ENCODE measurements at regions of chr17 and their contacts with region 1.

Region 1: DNA sequence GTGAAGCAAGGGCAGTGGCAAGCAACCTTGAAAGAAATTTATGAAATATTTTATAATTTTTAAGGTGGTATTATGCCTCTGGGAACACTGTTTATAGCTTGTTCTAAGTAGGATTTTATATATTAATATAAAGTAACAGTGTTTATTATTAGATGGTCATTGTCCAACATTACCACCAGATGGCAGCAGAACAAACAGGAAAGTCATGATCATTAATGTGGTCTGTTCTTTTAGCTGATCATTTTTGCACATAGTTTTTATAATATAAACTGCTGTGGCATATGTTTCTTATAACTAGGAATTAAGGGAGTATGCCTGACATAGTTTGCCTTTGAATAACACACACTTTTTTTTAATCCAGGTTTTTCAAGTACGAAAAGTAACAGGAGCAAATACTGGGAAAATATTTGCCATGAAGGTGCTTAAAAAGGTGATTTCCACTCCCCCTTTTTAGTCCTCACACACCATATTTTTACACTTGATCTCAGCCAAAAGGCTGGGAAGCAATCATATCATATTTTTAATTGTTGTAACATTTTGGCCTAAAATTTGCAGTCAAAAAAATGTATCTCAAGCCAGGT is 21.4 kb downstream of the RPS6KB1 start:
- DNase-seq: no peak
- H3K4me3 ChIP-seq: no peak overlapping the region
- CTCF ChIP-seq: peak; percentile 39

Region 2: DNA sequence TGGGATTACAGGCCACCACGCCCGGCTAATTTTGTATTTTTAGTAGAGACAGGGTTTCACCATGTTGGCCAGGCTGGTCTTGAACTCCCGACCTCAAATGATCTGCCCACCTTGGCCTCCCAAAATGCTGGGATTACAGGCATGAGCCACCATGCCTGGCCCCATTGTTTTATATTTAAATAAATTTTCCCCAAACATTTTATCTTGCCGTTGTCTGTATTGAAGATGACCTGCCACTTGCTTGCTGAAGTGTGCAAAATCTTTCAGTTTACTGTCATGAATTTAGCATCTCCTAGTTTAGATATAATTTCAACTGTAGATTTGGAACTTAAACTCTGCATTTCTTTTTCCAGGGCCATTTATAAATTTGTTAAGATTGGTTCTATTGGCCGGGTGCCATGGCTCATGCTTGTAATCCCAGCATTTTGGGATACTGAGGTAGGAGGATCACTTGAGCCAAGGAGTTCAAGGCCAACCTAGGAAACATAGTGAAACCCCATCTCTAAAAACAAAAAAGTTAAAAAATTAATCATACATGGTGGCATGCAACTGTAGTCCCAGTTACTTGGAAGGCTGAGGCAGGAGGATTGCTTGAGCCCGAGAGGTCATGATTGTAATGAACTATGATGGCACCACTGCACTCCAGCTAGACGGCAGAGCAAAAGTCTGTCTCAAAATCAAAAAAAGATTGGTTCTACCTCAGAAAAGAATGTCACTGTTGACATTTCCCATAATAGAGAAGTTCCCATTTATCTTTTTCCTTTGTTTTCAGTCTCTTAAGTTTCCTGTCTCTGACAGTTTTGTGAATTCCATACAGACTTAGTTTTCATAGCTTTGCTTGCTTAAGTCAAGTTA is 122.5 kb before region 1 on chr17:
- CTCF ChIA-PET with region 1: no interaction called
- POLR2A ChIA-PET with region 1: no interaction called
- DNase-seq: peak; percentile 67
- H3K4me3 ChIP-seq: no peak overlapping the region
- CTCF ChIP-seq: no peak

Region 3: GRCh38 chr17:59892924-59893676 is 21.3 kb before region 1 on chr17 and contains the starts of genes RPS6KB1 and TUBD1:
- CTCF ChIA-PET with region 1: interaction called, 13 read pairs
- POLR2A ChIA-PET with region 1: no interaction called
- DNase-seq: peak; percentile 97
- H3K4me3 ChIP-seq: peak within 1 kb of the TSS; percentile 89
- CTCF ChIP-seq: no peak

Region 4: GRCh38 chr17:59899103-59899502 is 15.3 kb before region 1 on chr17:
- CTCF ChIA-PET with region 1: interaction called, 27 read pairs
- POLR2A ChIA-PET with region 1: no interaction called
- DNase-seq: no peak
- H3K4me3 ChIP-seq: no peak overlapping the region
- CTCF ChIP-seq: no peak

Region 5: GRCh38 chr17:59941131-59941530 is 26.8 kb after region 1 on chr17:
- CTCF ChIA-PET with region 1: interaction called, 12 read pairs
- POLR2A ChIA-PET with region 1: no interaction called
- DNase-seq: no peak
- H3K4me3 ChIP-seq: no peak overlapping the region
- CTCF ChIP-seq: no peak

Region 6: GRCh38 chr17:60036796-60037612 is 122.6 kb after region 1 on chr17:
- CTCF ChIA-PET with region 1: interaction called, 91 read pairs
- POLR2A ChIA-PET with region 1: no interaction called
- DNase-seq: no peak
- H3K4me3 ChIP-seq: no peak overlapping the region
- CTCF ChIP-seq: peak; percentile 97